HEK293 (cell line): ENCODE measurements at regions of chr3 and their contacts with region 1.

Region 1: DNA sequence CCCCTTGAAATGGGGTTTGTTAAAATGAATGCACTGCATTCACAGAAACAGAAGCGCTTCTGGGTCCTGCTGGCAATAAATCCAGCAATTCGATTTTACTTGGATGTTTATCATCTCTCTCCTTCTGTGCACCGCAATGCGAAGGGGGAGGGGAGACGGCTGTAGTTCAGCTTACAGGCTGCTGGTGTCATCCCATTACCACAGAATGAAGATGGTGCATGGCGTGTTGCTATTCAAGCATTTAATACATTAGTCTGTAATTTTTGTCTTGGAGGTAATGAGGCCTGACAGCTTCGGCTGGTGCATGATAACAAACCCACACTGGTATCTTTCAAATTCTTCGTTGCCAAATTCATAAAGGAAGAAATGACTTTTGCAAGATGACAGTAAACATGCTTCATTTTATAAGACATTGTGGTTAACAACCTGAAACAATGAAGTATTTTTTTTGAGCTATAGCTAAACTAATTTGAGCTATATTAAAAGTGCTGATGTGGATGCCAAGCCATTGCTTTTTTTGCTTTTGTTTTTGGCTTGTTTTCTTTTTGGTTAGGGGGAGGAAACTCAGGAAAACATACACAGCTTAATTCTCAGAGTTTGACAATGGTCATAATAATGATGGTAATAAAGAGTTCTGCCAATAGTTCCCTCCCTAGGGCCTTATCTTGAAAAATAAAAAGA is 418.3 kb downstream of the OTOL1 start:
- H3K4me3 ChIP-seq: no peak overlapping the region
- H3K27ac ChIP-seq: no peak overlapping the region
- H3K4me1 ChIP-seq: no peaks in the 10 kb centered on the region
- CTCF ChIP-seq: no peak

Region 2: DNA sequence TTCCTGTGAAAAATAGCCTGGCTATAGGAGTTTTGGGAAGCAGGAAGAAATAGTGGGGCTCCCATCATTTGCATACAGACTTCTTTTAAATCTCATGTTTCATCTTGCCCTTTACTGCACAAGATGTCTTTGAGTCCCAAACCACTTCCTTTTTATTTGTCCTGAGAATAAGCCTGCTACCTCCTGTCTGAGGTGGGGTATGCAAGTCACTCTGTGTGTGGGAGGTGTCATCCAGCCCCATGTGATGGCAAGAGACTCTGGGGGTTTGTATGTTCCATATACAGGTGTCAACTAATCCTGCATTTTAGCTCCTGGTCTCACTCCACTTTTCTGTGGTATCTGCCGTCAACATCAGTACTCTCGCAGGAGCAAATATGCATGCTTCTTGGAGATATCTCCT is 316.2 kb before region 1 on chr3:
- CTCF ChIA-PET with region 1: interaction called, 11 read pairs
- POLR2A ChIA-PET with region 1: no interaction called
- H3K4me3 ChIP-seq: no peak overlapping the region
- H3K27ac ChIP-seq: no peak overlapping the region
- H3K4me1 ChIP-seq: no peaks in the 10 kb centered on the region
- CTCF ChIP-seq: no peak